Cardiac septum (tissue), 1 donor: ENCODE measurements at regions of chr17 and their contacts with region 1.

Region 1: DNA sequence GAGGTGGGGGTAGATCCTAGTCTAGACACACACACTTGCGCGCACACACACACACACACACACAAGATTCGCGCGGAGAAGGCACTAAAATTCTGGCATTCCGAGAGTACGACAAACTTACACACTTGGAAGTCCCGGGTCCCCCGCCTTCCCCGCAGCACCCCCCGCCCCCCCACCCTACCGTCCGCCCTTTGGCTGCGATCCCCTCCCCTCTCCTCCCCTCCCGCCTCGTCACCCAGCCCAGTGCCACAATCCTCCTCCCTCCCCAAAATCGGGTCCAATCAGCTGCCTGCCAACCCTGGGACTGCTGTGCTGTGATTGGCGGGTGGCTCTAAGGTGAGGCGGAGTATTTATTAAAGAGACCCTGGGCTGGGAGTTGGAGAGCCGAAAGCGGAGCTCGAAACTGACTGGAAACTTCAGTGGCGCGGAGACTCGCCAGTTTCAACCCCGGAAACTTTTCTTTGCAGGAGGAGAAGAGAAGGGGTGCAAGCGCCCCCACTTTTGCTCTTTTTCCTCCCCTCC is at the start of gene SOX9:
- DNase-seq: peak; percentile 93
- total RNA-seq, gene SOX9: 24.0 TPM

Region 2: DNA sequence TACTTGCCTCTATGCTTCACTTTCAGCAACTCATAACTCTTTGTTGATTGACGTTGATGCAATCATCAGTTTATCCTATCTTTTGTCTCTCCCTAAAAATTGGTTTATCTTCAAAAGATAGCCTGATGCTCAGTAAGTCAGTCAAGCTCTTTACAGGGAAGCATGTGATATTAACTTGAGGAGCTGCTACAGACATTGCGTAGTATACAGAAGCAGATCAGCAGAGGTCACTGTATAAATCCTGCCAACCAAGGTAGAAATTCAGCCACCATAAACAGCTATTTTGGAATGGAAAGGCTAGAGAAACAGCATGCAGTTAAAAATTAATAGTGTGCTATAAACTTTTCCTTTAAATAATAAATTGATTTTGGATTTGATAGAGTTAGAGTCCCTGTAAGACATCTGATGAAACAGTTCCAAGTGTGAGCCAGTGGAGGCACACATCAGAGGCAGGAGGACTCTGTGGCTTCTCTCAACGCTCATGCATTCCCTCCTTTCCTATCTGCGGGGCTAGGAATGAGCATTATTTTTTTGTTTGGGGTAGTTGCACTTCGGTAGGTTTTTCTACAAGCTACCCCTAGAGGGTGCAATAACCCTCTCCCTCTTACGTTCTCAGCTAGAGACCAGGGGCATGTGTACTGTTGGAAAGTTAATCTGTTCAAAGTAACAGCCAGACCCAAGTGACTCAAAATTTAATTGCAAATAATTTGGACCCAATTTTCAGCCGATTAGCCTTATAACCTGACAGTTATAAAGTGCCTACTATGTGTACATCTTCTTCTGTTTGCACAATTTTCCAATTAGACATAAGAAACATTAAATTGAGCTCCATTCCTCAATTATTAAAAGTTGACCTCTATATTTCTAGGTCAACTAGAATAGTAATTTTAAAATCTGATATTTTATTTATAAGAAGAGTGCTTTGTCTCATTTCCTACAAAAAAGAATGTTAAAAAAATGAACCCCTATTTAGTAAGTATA is 647.6 kb before region 1 on chr17:
- intact Hi-C with region 1: loop called (anchors 5 kb)
- DNase-seq: no peak

Region 3: DNA sequence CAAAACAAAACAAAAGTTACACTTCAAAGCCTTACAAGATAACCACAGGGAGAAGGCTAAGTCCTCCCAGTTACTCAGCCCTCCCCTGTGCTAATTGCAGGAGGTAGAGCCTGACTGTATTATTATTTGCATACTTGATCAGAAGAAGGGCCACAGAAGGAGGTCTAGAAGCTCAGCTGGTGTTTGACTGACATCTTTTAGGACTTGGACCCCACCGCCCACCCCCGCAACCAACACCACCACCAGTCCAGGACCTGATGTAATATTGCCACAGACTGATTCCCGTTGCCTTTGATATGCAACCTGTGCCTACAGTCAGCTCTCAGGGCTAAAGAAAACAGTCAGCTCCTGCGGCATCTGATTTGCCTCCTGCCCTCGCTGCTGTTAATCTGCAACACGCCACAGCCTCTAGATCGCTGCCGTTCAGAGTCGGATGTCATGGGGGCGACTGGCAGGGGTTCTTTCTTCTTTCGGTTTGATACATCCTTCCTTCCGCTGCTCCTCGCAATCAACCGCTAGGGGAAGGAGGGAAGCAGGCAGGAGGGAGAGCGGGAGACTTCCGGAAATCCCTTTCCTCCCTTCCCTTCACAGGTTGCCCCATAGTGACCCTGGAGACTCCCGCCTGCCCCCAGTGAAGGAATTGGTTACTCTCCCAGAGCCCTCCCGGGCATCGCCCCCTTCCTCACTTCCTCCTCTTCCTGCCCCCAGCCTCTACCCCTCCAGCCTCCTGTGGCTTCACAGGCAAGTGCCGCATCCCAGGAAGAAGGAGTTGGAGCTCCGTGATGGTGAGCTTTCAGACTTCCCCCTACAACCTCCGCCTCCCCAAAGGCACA is 90.4 kb before region 1 on chr17:
- intact Hi-C with region 1: no loop called
- DNase-seq: no peak

Region 4: DNA sequence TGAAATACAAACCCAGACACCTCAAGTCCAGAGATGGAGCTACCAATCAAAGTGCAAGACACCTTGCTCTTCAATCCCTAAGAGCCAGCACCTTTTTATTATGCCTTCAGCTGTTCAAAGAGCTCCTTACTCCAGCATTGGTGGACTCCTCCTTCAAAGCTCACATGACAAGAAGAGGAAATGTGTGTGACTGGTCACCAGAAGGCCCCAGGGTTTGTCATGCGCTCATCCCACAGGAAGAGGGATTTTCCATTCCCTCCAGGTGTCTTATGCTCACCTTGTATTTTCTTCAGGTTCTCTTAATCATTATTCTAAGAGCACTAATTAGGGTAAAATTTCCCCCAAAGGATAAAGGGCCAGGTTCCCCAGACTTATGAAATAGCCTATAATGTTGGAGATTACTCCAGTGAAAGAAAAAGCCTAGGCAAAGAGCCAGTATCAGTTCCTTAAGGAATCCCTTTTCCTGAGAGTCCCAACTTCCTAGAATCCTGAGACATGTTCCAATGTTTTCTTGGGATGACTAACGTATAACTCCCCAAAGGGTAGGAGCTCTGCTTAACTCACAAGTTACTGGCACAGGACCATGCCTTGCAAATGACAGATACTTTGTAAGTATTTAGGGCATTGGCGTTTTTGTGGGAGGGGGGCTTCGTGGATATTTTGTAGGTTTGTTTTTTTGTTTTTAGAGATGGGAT is 56.8 kb before region 1 on chr17:
- intact Hi-C with region 1: no loop called
- DNase-seq: no peak

Region 5: DNA sequence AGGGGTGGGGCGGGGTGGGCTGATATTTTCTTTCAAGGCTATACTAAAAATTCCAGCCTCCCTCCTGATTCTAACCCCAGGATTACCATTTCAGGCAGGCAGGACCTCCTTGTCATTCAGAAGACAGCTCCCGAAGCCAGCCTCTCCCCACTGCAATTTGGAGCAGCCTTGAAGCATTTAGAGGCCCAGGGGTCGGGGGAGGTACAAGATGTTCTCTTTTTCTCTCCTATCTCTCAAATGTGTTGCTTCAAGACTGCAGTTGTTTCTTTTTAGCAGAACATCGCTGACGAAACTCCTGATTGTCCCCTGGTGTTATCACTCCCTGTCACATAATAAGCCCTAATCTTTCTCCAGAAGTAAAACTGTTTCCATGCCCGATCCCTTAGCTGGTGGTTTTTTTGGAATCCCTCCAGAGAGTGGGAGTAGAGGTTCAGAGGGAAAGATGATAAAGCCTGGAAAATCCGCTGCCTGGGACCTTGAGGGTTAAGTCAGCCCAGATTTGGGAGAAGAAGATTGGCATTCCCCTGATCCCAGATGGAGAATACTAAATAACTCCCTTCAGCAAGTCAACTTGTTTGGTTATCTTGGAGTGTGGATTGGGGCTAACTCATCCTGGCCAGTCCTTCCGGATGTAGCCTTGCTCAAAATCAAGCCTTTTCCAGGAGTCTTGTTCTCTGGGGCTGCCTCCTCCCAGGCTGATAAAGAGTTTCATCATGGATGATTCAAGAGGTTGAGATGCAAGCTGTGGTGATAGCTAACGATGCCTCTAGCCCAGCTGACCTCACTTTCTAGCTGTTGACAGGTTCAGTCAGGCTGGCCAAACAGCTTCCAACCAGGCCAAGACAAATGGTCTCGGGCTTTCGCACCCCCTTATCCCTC is 71.5 kb after region 1 on chr17:
- intact Hi-C with region 1: loop called (anchors 5 kb)
- DNase-seq: no peak

Region 6: DNA sequence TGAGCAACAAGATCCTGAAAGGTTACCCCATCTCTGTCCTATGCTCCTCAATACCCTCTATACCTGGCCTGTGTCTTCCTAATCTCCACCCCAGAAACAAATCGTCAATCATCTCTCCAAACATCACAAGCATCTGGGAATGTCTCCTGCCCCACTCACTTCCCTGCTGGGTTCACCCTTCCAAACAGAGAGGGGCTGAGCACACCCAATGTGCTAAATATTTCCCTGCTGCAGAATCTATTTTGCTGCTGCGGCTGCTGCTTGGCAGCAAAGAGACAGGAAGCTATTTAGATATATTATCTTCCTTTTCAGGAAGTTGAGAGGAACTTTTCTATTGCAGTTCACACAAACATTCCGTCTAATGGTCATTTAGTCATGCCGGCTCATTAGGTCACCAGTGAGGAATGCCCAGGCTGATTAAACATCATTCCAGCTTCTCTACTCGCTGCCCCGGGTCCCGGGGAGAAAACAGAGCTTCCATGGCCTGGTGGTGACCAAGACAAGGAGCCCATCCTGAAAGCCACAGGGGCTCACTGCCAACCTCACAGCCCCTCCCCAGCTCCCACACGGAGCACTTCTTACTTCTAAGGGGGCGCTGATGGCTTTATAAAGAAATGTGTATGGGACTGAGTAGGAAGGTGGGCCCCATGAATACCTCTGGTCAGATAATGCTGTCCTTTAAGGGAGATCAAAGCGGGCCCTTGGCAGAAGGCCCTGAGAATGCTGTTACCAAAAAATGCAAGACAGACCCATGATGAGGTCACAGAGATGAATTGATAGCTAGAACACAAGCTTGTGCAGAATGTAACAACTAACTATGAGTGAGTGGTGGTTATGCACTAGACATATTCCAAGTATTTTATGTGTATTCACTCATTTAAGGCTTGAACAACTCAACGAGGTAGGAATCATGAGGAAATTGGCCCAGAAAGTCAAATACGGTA is 218.4 kb after region 1 on chr17:
- intact Hi-C with region 1: loop called (anchors 2 kb)
- DNase-seq: no peak

Region 7: DNA sequence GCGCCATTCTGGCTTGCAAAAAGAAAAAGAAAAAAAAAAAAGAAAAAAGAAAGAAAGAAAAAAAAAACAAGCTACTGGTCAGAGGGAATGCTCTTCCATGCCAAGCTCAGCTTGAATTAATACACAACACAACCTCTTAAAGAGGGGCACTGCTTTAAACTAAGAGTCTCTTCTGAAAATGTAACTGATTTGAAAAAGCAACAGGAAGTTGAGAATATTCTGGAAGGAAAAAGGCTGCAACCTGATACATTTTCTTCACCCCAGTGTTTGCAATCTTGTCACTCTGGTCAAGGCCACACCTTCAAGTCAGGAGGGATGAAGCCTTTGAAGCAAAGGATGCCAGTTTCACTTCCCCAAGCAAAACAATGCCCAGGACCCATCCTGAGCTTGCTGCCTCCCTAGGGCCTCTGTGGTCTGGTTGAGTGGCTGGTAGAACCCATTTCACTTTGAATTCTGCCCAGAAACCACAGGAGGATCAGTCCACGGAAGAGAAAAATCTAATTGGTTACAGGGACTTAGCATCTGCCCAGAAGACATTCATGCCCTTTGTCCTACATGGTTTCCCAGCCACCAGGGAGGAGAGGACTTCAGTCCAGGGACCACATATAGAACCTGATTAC is 389.8 kb after region 1 on chr17:
- intact Hi-C with region 1: loop called (anchors 10 kb)
- DNase-seq: no peak